Activated CD4-positive, alpha-beta memory T cell treated with anti-CD3 and anti-CD28 coated beads, Interleukin-2, amount 10 ng/mL, durations not matched to agents 7 days and 5 days (primary cell): ENCODE measurements at regions of chr10 and their contacts with region 1.

Region 1: DNA sequence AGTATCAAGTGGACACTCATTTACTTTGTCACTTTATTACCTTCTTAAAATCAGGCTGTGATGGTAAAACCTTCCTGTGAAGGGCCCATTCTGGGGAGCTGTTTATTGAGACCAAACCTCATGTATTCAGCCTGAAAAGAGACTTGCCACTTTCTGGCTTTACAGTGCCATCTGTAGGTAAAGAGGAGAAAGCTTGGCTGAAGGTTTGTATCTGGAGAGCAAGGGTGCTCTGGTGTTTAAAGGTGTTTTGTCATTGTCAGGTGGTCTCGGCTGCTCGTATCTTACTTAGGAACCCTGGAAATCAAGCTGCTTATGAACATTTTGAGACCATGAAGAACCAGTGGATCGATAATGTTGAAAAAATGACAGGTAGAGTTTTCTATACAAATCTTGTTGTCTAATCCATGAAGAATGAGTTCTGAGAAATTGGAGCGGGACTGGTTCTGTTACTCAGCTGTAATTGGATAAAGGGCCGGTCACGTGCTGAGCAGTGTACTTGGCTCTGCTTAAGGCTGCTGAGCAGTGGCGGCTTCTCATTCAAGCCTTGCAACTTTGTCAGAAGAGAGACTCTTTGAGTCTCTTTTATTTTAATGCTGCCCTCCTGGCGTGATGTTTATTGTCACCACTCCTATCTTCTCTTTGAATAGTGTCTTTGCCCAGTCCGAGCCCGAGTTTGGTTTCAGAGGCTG is 46.9 kb downstream of the AP3M1 start:
- DNase-seq: no peak
- H3K4me3 Mint-ChIP-seq: no peak overlapping the region
- H3K27ac Mint-ChIP-seq: no peak overlapping the region
- H3K4me1 Mint-ChIP-seq: peaks cover 7% of the 10 kb centered on the region
- H3K27me3 Mint-ChIP-seq: no peaks in the 10 kb centered on the region

Region 2: GRCh38 chr10:74039561-74040145 is 64.1 kb before region 1 on chr10:
- CTCF ChIA-PET with region 1: no interaction called
- POLR2A ChIA-PET with region 1: no interaction called
- DNase-seq: no peak
- H3K4me3 Mint-ChIP-seq: no peak overlapping the region
- H3K27ac Mint-ChIP-seq: no peak overlapping the region
- H3K4me1 Mint-ChIP-seq: peaks cover 20% of the 10 kb centered on the region
- H3K27me3 Mint-ChIP-seq: no peaks in the 10 kb centered on the region

Region 3: DNA sequence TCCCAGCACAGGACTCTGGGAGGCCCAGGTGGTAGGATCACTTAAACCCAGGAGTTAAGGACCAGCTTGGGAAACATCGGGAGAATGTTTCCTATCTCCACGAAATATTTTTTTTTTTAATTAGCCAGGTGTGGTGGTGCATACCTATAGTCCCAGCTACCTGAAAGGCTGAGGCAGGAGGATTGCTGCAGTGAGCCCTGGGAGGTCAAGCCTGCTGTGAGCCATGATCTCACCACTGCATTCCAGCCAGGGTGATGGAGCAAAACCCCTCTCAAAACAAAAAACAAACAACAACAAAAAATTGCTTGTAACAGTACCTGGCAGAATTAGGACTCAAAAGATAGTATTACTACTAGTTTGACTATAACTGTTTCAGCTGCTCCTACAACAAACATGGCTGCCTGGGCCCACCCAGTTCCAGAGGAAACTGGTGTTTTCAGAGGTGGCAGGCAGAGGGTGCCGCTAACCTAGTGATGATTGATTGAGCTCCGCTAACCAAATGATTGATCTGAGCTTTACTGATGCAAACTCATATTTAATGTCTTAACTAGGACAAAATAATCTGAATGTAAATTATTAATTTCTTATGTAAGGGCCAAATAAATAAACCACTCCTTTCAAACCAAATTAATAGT is 10.1 kb before region 1 on chr10:
- CTCF ChIA-PET with region 1: interaction called, 12 read pairs
- POLR2A ChIA-PET with region 1: no interaction called
- DNase-seq: no peak
- H3K4me3 Mint-ChIP-seq: no peak overlapping the region
- H3K27ac Mint-ChIP-seq: no peak overlapping the region
- H3K4me1 Mint-ChIP-seq: peaks cover under 1% of the 10 kb centered on the region
- H3K27me3 Mint-ChIP-seq: no peaks in the 10 kb centered on the region

Region 4: GRCh38 chr10:74118804-74119203 is 15.1 kb after region 1 on chr10:
- CTCF ChIA-PET with region 1: interaction called, 4 read pairs
- POLR2A ChIA-PET with region 1: interaction called, 12 read pairs
- DNase-seq: no peak
- H3K4me3 Mint-ChIP-seq: no peak overlapping the region
- H3K27ac Mint-ChIP-seq: peak overlapping the region; percentile 40
- H3K4me1 Mint-ChIP-seq: peaks cover 5% of the 10 kb centered on the region
- H3K27me3 Mint-ChIP-seq: no peaks in the 10 kb centered on the region